Mammary epithelial cell (primary cell): ENCODE measurements at regions of chr15 and their contacts with region 1.

Region 1: GRCh38 chr15:80856809-80857377 is 77.7 kb downstream of the CEMIP start:
- DNase-seq: no peak
- H3K4me3 ChIP-seq: no peak overlapping the region
- H3K27ac ChIP-seq: no peak overlapping the region
- H3K4me1 ChIP-seq: peaks cover 26% of the 10 kb centered on the region
- H3K27me3 ChIP-seq: no peaks in the 10 kb centered on the region
- CTCF ChIP-seq: no peak

Region 2: DNA sequence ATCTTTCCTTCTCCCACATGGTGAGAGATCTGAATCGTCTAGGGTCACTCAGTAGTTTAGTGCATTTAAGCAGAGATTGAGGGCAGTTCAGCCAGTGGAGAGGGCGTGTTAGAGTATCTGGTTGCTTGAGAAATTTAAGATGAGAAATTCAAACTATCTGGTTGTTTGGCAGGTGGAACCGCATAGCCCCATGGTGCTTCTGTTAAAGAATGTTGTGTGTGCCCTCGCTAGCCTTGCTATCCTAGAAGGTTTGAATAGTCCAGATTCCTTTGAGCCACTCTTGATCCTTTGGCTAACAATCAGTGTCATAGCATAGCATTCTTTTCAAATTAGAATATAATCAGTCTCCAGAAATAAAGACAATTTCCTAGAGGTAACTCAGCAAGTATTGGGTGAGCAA is 129.7 kb before region 1 on chr15:
- CTCF ChIA-PET with region 1: no interaction called
- dilution Hi-C with region 1: no loop called
- in situ Hi-C with region 1: no loop called
- intact Hi-C with region 1: no loop called
- DNase-seq: no peak
- H3K4me3 ChIP-seq: no peak overlapping the region
- H3K27ac ChIP-seq: no peak overlapping the region
- H3K4me1 ChIP-seq: no peaks in the 10 kb centered on the region
- H3K27me3 ChIP-seq: no peaks in the 10 kb centered on the region
- CTCF ChIP-seq: no peak

Region 3: GRCh38 chr15:80755885-80756284 is 101.0 kb before region 1 on chr15:
- CTCF ChIA-PET with region 1: no interaction called
- dilution Hi-C with region 1: no loop called
- in situ Hi-C with region 1: no loop called
- intact Hi-C with region 1: no loop called
- DNase-seq: no peak
- H3K4me3 ChIP-seq: no peak overlapping the region
- H3K27ac ChIP-seq: no peak overlapping the region
- H3K4me1 ChIP-seq: peaks cover 6% of the 10 kb centered on the region
- H3K27me3 ChIP-seq: no peaks in the 10 kb centered on the region
- CTCF ChIP-seq: no peak

Region 4: GRCh38 chr15:80893777-80894176 is 36.9 kb after region 1 on chr15:
- CTCF ChIA-PET with region 1: no interaction called
- dilution Hi-C with region 1: loop called (anchors 5 kb)
- in situ Hi-C with region 1: no loop called
- intact Hi-C with region 1: no loop called
- DNase-seq: no peak
- H3K4me3 ChIP-seq: no peak overlapping the region
- H3K27ac ChIP-seq: no peak overlapping the region
- H3K4me1 ChIP-seq: peaks cover 3% of the 10 kb centered on the region
- H3K27me3 ChIP-seq: no peaks in the 10 kb centered on the region
- CTCF ChIP-seq: no peak

Region 5: DNA sequence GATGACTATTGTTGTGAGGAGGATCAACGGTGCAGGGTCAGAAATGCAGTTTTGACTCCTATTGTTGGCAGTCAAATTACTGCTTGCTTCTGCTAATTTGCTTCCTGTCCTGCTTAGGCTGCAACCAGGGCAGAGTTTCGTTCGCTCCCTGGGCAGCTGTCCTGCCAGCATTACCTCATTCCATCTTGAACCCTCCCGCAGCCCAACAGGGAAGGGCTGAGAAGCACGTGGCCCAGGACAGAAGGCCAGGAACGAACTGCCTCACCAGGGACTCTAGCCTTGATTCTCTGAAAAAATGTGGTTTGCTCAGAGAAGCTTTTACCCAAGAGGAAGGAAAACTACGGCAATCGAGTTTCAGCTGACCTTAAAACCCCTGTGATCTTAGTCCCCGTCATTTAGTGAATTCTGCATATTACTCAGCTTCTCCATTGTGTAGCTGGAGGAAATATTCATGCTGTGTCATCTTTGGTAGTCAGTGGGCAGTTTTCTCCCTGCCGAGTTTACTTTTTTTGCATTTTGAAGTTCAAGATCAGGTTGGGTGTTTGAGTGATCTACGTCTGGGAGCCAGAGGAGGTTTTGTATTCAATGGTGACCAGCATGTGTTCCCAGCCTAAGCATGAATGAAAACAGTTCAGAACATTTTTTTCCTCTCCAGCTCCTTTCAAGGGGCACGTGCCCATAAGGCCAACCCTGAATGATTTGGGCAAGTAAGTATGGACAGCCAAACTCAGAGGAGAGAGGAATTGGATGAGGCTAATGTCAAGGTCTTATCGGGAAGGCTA is 166.8 kb after region 1 on chr15:
- CTCF ChIA-PET with region 1: no interaction called
- dilution Hi-C with region 1: no loop called
- in situ Hi-C with region 1: no loop called
- intact Hi-C with region 1: no loop called
- DNase-seq: no peak
- H3K4me3 ChIP-seq: no peak overlapping the region
- H3K27ac ChIP-seq: no peak overlapping the region
- H3K4me1 ChIP-seq: no peaks in the 10 kb centered on the region
- H3K27me3 ChIP-seq: no peaks in the 10 kb centered on the region
- CTCF ChIP-seq: no peak